PC-9 (cell line): ENCODE measurements at regions of chr4 and their contacts with region 1.

Region 1: GRCh38 chr4:94583914-94584641 is 132.3 kb downstream of the PDLIM5 start:
- DNase-seq: no peak
- H3K4me3 ChIP-seq: no peak overlapping the region
- H3K27ac ChIP-seq: no peak overlapping the region
- H3K4me1 ChIP-seq: no peaks in the 10 kb centered on the region
- H3K27me3 ChIP-seq: no peaks in the 10 kb centered on the region
- CTCF ChIP-seq: no peak

Region 2: DNA sequence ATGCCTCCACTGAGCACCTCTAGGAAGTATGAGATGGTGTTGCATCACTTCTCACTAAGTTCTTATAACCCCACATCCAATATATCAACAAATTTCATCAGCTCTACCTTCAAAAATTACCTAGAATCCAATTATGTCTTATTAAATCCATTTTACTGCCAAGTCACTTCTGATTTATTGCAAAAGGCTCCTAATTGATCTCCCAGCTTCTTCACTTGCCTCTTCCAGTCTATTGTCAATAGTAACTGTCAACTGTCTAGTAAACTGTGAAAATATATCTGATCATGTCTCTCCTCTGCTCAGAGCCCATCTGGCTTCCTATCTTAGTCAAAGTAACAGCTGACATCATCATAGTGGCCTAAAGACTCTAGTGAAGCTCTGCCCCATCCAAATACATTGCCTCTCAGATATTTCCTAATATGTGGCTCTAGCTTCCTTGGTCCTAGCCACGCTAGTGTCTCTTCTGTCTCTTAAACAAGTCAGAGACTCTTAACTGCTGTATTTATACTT is 1170.0 kb before region 1 on chr4:
- CTCF ChIA-PET with region 1: no interaction called
- POLR2A ChIA-PET with region 1: interaction called, 10 read pairs
- intact Hi-C with region 1: no loop called
- DNase-seq: no peak
- H3K4me3 ChIP-seq: no peak overlapping the region
- H3K27ac ChIP-seq: no peak overlapping the region
- H3K4me1 ChIP-seq: no peaks in the 10 kb centered on the region
- H3K27me3 ChIP-seq: no peaks in the 10 kb centered on the region
- CTCF ChIP-seq: no peak